IMR-90 (cell line): ENCODE measurements at regions of chr18 and their contacts with region 1.

Region 1: GRCh38 chr18:49561289-49562193 is at the start of gene LIPG:
- DNase-seq: peak; percentile 50
- ATAC-seq: peak; percentile 62
- H3K4me3 ChIP-seq: peak within 1 kb of the TSS; percentile 28
- H3K27ac ChIP-seq: no peak within 1 kb of the TSS
- H3K4me1 ChIP-seq: peaks cover 7% of the 10 kb centered on the region
- H3K27me3 ChIP-seq: peaks cover 68% of the 10 kb centered on the region
- CTCF ChIP-seq: no peak
- POLR2A ChIP-seq: no peak
- RAD21 ChIP-seq: no peak
- total RNA-seq, gene LIPG: under 0.01 TPM in 1 of 2 replicates, not detected in the other

Region 2: DNA sequence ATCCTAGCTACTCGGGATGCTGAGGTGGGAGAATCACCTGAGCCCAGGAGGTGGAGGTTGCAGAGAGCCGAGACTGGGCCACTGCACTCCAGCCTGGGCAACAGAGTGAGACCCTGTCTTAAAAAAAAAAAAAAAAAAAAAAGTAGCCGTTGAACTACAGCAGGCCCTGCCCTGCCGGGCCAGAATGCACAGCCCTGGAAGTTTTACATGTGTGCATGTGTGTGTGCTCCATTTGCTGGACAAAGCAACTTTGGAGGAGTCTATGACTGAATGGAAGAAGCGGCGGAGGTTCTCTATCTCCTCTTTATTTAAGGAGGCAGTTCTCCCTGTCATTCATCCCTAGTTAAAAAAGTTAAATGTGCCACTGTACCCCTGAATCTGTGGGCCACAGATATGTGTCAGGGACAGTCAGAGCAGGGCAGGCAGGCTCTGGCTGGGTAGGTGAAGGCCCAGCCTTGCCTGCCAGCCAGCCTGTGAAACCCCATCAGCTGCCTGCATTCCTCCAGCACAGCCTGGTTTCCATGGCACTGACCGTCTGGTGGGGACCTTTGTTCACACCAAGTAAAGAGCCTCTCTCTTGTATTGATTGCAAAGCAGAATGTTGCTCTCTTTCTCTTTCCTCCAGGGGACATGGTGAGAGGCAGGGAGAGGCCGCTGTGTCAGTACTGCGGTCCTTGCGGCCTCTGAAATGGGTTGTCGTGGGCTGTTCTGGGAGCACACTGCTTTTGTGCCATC is 11.2 kb after region 1 on chr18:
- CTCF ChIA-PET with region 1: no interaction called
- POLR2A ChIA-PET with region 1: interaction called, 10 read pairs
- dilution Hi-C with region 1: no loop called
- in situ Hi-C with region 1: no loop called
- intact Hi-C with region 1: no loop called
- DNase-seq: no peak
- ATAC-seq: no peak
- H3K4me3 ChIP-seq: no peak overlapping the region
- H3K27ac ChIP-seq: no peak overlapping the region
- H3K4me1 ChIP-seq: no peaks in the 10 kb centered on the region
- H3K27me3 ChIP-seq: peaks cover 18% of the 10 kb centered on the region
- CTCF ChIP-seq: no peak
- POLR2A ChIP-seq: no peak
- RAD21 ChIP-seq: no peak

Region 3: DNA sequence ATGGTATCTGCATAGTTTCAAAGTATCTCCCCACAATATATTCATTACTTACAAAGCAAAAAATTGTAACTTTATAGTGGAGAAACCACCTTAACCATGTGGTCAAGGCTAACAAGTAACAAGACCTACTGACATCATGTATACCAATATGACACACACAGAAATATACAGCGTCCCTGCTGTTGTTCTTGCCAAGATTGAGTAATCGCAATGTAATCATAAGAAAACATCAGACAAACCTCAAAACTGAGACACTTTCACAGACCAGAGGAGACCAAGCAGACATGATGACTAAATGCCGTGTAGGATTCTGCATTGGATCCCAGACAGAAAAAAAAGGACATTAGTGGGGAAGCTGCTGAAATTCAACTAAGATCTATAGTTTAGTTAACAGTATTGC is 128.8 kb after region 1 on chr18:
- CTCF ChIA-PET with region 1: no interaction called
- POLR2A ChIA-PET with region 1: no interaction called
- dilution Hi-C with region 1: no loop called
- in situ Hi-C with region 1: no loop called
- intact Hi-C with region 1: loop called (anchors 10 kb)
- DNase-seq: peak; percentile 97
- ATAC-seq: peak; percentile 63
- H3K4me3 ChIP-seq: no peak overlapping the region
- H3K27ac ChIP-seq: no peak overlapping the region
- H3K4me1 ChIP-seq: peaks cover 9% of the 10 kb centered on the region
- H3K27me3 ChIP-seq: no peaks in the 10 kb centered on the region
- CTCF ChIP-seq: no peak
- POLR2A ChIP-seq: no peak
- RAD21 ChIP-seq: no peak

Region 4: GRCh38 chr18:49757513-49758262 is 196.1 kb after region 1 on chr18:
- CTCF ChIA-PET with region 1: no interaction called
- POLR2A ChIA-PET with region 1: no interaction called
- dilution Hi-C with region 1: no loop called
- in situ Hi-C with region 1: loop called (anchors 10 kb)
- intact Hi-C with region 1: no loop called
- DNase-seq: no peak
- ATAC-seq: no peak
- H3K4me3 ChIP-seq: no peak overlapping the region
- H3K27ac ChIP-seq: no peak overlapping the region
- H3K4me1 ChIP-seq: no peaks in the 10 kb centered on the region
- H3K27me3 ChIP-seq: peaks cover 6% of the 10 kb centered on the region
- CTCF ChIP-seq: no peak
- POLR2A ChIP-seq: no peak
- RAD21 ChIP-seq: no peak

Region 5: GRCh38 chr18:49768051-49768391 is 206.5 kb after region 1 on chr18:
- CTCF ChIA-PET with region 1: interaction called, 3 read pairs
- POLR2A ChIA-PET with region 1: no interaction called
- dilution Hi-C with region 1: no loop called
- in situ Hi-C with region 1: no loop called
- intact Hi-C with region 1: loop called (anchors 1 kb)
- DNase-seq: peak; percentile 65
- ATAC-seq: 0 out of 2 replicates have a peak, but pooled peaks have one; percentile 52
- H3K4me3 ChIP-seq: no peak overlapping the region
- H3K27ac ChIP-seq: no peak overlapping the region
- H3K4me1 ChIP-seq: peaks cover 5% of the 10 kb centered on the region
- H3K27me3 ChIP-seq: peaks cover 4% of the 10 kb centered on the region
- CTCF ChIP-seq: peak; percentile 71
- POLR2A ChIP-seq: no peak
- RAD21 ChIP-seq: peak; percentile 84

Region 6: DNA sequence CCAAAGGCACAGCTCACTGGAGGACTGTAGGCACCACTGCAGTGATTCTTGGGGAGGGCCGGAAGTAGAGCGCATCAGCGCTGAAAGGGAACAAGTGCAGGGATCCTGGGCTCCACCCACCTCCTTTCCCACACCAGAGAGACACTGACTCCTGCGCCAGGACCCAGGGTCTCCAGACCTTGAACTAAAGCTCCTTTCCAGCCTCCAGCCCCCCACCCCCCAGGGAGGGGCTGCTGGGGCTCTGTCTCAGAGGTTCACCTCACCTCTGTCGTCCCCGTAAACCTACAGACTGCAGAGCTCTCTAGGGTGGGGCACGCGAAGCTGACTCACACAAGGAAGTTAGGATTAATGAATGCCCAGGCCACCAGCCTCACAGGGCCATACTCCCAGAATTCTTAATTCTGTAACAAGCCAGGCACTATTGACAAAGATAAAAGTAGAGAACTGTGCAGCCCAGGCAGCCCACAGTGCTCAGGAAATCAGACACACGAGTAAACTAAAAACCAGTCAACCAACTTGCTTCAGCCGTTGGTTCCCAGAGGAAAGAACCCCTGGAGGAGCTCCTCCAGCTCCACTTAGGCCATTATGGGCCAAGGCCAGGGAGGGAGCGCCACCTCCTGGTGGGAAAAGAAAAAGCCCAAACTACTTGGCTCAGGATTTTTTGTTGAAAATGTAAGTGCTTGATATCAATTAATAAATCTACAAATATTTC is 296.9 kb after region 1 on chr18:
- CTCF ChIA-PET with region 1: interaction called, 6 read pairs
- POLR2A ChIA-PET with region 1: no interaction called
- dilution Hi-C with region 1: no loop called
- in situ Hi-C with region 1: loop called (anchors 5 kb)
- intact Hi-C with region 1: loop called (anchors 1 kb)
- DNase-seq: peak; percentile 70
- ATAC-seq: peak; percentile 94
- H3K4me3 ChIP-seq: no peak overlapping the region
- H3K27ac ChIP-seq: no peak overlapping the region
- H3K4me1 ChIP-seq: no peaks in the 10 kb centered on the region
- H3K27me3 ChIP-seq: peaks cover 17% of the 10 kb centered on the region
- CTCF ChIP-seq: peak; percentile 99
- POLR2A ChIP-seq: peak; percentile 70
- RAD21 ChIP-seq: peak; percentile 100